ENCODE measurements at regions of chr6 and their contacts with region 1.

Region 1: GRCh38 chr6:139927236-139927635 is 552.8 kb upstream of the CITED2 start:
- DNase-seq: no peak
- ATAC-seq: no peak
- H3K4me3 Mint-ChIP-seq: no peak overlapping the region
- H3K27ac Mint-ChIP-seq: no peak overlapping the region
- H3K4me1 Mint-ChIP-seq: no peaks in the 10 kb centered on the region
- H3K27me3 Mint-ChIP-seq: peaks cover 10% of the 10 kb centered on the region

Region 2: DNA sequence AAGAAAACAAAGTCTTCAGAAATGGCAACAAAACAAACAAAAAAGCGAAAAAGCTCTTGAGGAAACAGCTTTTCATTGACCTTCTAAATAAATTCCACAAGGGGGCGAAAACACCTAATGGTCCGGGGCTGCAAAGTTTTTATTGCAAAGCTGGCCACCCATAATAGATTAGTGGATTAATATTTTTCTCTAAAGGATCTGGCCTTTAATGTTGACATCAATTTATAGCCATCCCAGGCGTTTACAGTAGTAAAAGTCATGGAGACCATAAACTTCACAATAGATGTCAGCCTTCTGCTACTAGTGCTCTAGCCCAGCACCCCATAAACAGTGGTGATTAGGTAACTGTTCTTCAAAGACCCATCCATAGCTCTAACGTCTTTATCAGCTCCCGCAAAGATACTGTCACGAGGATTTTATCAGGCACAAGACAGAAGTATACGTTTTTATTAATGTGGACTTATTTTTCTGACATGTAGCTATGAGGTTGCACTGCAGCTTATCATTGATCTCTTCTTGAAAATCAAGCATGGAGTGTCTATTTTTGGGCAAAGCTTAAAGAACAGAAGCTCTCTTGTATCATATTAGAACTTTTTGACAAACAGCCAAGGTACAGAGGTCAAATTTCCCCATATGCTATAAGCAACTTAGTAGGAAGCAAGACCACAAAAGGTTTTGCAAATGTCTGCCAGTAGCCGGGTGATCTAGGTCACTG is 557.5 kb before region 1 on chr6:
- CTCF ChIA-PET with region 1: interaction called, 3 read pairs
- POLR2A ChIA-PET with region 1: no interaction called
- intact Hi-C with region 1: loop called (anchors 2 kb)
- DNase-seq: peak; percentile 32
- ATAC-seq: no peak
- H3K4me3 Mint-ChIP-seq: peak overlapping the region; percentile 12
- H3K27ac Mint-ChIP-seq: peak overlapping the region; percentile 49
- H3K4me1 Mint-ChIP-seq: peaks cover 37% of the 10 kb centered on the region
- H3K27me3 Mint-ChIP-seq: no peaks in the 10 kb centered on the region

Region 3: DNA sequence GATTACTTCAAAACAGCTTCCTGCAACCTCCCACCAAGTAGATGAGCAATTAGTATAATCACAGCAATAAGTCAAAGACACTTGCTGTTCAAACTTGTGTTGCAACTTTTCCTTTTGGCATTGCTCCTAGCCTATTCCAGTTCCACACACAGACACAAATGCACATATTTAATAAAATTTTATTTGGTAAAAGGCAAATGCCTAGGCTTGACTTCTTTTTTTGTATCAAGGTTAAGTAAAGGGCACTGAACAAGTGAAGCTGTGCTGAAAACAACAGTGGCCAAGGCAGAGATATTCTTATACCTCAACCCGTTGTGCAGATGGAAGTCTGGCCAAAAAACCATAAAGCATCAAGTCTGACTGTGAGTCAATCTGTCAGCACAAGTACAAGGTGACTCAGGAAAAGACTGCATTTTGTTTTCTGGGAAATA is 155.6 kb after region 1 on chr6:
- CTCF ChIA-PET with region 1: no interaction called
- POLR2A ChIA-PET with region 1: no interaction called
- intact Hi-C with region 1: no loop called
- DNase-seq: no peak
- ATAC-seq: no peak
- H3K4me3 Mint-ChIP-seq: no peak overlapping the region
- H3K27ac Mint-ChIP-seq: no peak overlapping the region
- H3K4me1 Mint-ChIP-seq: no peaks in the 10 kb centered on the region
- H3K27me3 Mint-ChIP-seq: peaks cover 2% of the 10 kb centered on the region